IMR-90 (cell line): ENCODE measurements at regions of chr1 and their contacts with region 1.

Region 1: DNA sequence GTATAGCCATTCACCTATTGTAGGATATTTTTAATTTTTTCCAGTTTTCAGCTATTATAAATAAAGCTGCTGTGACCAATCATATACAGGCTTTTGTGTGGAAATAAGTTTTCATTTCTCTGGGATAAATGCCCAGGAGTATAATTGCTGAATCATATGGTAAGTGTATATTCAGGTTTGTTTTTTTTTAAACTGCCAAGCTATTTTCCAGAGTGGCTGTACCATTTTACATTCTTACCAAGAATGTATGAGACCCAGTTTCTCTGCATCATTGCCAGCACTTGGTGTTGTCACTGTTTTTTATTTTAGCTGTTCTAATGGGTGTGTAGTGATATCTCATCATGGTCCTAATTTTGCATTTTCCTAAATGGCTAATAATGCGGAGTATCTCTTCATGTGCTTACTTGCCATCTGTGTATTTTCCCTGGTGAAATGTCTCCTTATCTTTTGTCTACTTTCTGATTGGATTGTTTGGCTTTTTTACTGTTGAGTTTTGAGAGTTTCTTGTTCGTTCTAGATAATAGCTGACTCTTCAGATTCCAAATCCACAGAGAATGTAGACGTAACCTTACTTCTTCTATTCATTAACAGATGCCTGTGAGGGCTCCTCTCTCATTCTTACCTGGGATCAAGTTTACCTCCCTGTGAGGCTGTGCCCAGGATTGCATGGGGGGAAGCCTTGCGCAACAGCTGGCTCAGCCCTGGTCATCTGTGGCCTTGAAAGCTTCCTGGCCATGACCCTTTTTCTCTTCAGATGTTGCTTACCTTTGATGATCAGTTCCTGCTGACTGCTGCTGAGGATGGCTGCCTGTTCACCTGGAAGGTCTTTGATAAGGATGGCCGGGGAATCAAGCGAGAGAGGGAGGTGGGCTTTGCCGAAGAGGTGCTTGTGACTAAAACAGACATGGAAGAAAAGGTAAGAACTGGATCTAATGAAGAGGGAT is 42.6 kb downstream of the CFAP57 start:
- DNase-seq: peak; percentile 78
- ATAC-seq: peak; percentile 84
- H3K4me3 ChIP-seq: no peak overlapping the region
- H3K27ac ChIP-seq: no peak overlapping the region; the same call in 1 of the 2 replicates
- H3K4me1 ChIP-seq: no peaks in the 10 kb centered on the region; the same call in 1 of the 2 replicates
- H3K27me3 ChIP-seq: no peaks in the 10 kb centered on the region
- CTCF ChIP-seq: no peak
- POLR2A ChIP-seq: no peak
- RAD21 ChIP-seq: no peak

Region 2: DNA sequence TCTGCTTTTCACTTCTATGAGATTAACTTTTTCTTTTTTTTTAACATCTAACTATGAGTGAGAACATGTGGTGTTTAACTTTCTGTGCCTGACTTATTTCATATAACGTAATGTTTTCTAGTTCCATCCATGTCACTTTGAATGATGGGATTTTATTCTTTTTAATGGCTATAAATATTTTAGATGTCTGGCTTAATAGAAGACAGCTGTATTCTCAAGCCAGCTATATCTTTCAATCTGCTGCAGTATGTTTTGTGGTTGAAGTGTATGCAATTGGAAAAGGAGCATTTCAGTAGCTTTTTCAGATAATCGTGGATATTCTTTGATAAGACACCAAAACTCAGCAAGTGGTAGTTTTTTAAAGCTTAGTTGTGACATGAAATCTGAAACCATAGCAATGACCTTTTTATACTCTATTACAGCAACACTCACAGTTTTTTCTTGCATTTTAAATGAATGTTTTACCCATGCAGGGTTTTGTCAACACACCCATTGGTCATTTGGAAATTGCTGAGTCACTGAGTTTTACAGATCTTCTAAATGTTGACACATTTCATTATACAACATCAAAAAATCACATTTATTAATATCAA is 391.9 kb before region 1 on chr1:
- CTCF ChIA-PET with region 1: no interaction called
- POLR2A ChIA-PET with region 1: no interaction called
- dilution Hi-C with region 1: no loop called
- in situ Hi-C with region 1: no loop called
- intact Hi-C with region 1: no loop called
- DNase-seq: peak; percentile 39
- ATAC-seq: peak; percentile 72
- H3K4me3 ChIP-seq: no peak overlapping the region
- H3K27ac ChIP-seq: no peak overlapping the region; the same call in 1 of the 2 replicates
- H3K4me1 ChIP-seq: no peaks in the 10 kb centered on the region
- H3K27me3 ChIP-seq: no peaks in the 10 kb centered on the region
- CTCF ChIP-seq: no peak
- POLR2A ChIP-seq: no peak
- RAD21 ChIP-seq: no peak

Region 3: GRCh38 chr1:43177691-43178090 is 37.1 kb before region 1 on chr1:
- CTCF ChIA-PET with region 1: no interaction called
- POLR2A ChIA-PET with region 1: no interaction called
- dilution Hi-C with region 1: no loop called
- in situ Hi-C with region 1: no loop called
- intact Hi-C with region 1: no loop called
- DNase-seq: no peak
- ATAC-seq: no peak
- H3K4me3 ChIP-seq: no peak overlapping the region
- H3K27ac ChIP-seq: no peak overlapping the region
- H3K4me1 ChIP-seq: no peaks in the 10 kb centered on the region
- H3K27me3 ChIP-seq: peaks cover 21% of the 10 kb centered on the region
- CTCF ChIP-seq: no peak
- POLR2A ChIP-seq: no peak
- RAD21 ChIP-seq: no peak

Region 4: GRCh38 chr1:43639976-43640789 is 425.4 kb after region 1 on chr1:
- CTCF ChIA-PET with region 1: no interaction called
- POLR2A ChIA-PET with region 1: no interaction called
- dilution Hi-C with region 1: no loop called
- in situ Hi-C with region 1: no loop called
- intact Hi-C with region 1: loop called (anchors 5 kb)
- DNase-seq: no peak
- ATAC-seq: no peak
- H3K4me3 ChIP-seq: no peak overlapping the region
- H3K27ac ChIP-seq: no peak overlapping the region
- H3K4me1 ChIP-seq: peaks cover 2% of the 10 kb centered on the region; the same call in 1 of the 2 replicates
- H3K27me3 ChIP-seq: no peaks in the 10 kb centered on the region
- CTCF ChIP-seq: no peak
- POLR2A ChIP-seq: no peak
- RAD21 ChIP-seq: no peak